ENCODE measurements at regions of chr5 and their contacts with region 1.

Region 1: GRCh38 chr5:88660947-88661805 is 221.8 kb downstream of the MEF2C start:
- DNase-seq: peak; percentile 96
- ATAC-seq: peak; percentile 94
- H3K4me3 ChIP-seq: peak overlapping the region; percentile 73
- H3K27ac ChIP-seq: peak overlapping the region; percentile 71
- H3K4me1 ChIP-seq: peaks cover 8% of the 10 kb centered on the region; the same call in 1 of the 2 replicates
- H3K27me3 ChIP-seq: no peaks in the 10 kb centered on the region
- CTCF ChIP-seq: no peak

Region 2: DNA sequence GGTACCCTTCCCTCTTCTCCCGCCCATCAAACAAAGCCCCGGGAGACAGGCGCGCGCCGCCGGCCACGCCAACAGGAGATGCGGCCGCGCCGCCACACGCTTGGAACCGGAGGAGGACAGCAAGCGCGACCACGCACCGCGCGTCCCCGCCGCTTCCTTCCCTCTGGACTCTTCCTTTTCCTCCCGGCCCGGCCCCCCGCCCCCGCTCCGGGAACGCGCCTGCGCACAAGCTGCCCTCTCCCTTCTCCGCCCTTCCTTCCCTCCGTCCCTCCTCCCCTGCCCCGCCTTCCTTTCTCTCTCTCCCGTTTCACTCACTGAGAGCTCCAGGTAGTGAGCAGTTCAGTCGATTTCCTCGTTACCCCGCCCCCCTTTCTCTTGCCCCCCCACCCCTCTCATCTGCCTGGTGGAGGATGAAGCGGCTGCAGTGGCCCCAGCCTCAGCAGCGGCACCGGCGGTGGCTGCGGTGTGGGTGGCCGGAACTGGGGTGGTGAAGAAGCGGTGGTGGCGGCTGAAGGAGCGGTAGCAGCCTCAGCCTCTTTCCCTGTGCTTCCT is 1393.5 kb before region 1 on chr5 and contains the start of gene RASA1:
- CTCF ChIA-PET with region 1: no interaction called
- POLR2A ChIA-PET with region 1: interaction called, 10 read pairs
- intact Hi-C with region 1: no loop called
- DNase-seq: peak; percentile 98
- ATAC-seq: peak; percentile 71
- H3K4me3 ChIP-seq: peak within 1 kb of the TSS; percentile 95
- H3K27ac ChIP-seq: peak within 1 kb of the TSS; percentile 79
- H3K4me1 ChIP-seq: peaks cover 14% of the 10 kb centered on the region; the same call in 1 of the 2 replicates
- H3K27me3 ChIP-seq: no peaks in the 10 kb centered on the region
- CTCF ChIP-seq: no peak
- total RNA-seq, gene RASA1: 37.3 and 40.1 TPM in 2 replicates

Region 3: GRCh38 chr5:87754009-87754757 is 907.0 kb before region 1 on chr5:
- CTCF ChIA-PET with region 1: no interaction called
- POLR2A ChIA-PET with region 1: interaction called, 10 read pairs
- intact Hi-C with region 1: no loop called
- DNase-seq: no peak
- ATAC-seq: no peak
- H3K4me3 ChIP-seq: no peak overlapping the region
- H3K27ac ChIP-seq: no peak overlapping the region
- H3K4me1 ChIP-seq: peaks cover 30% of the 10 kb centered on the region
- H3K27me3 ChIP-seq: no peaks in the 10 kb centered on the region
- CTCF ChIP-seq: no peak

Region 4: GRCh38 chr5:88268385-88269184 is 392.6 kb before region 1 on chr5 and contains the start of gene TMEM161B:
- CTCF ChIA-PET with region 1: no interaction called
- POLR2A ChIA-PET with region 1: interaction called, 18 read pairs
- intact Hi-C with region 1: loop called (anchors 2 kb)
- DNase-seq: peak; percentile 93
- ATAC-seq: peak; percentile 98
- H3K4me3 ChIP-seq: peak within 1 kb of the TSS; percentile 96
- H3K27ac ChIP-seq: peak within 1 kb of the TSS; percentile 28; the same call in 1 of the 2 replicates
- H3K4me1 ChIP-seq: peaks cover 33% of the 10 kb centered on the region
- H3K27me3 ChIP-seq: no peaks in the 10 kb centered on the region
- CTCF ChIP-seq: no peak
- total RNA-seq, gene TMEM161B: 11.5 and 12.2 TPM in 2 replicates

Region 5: GRCh38 chr5:88405783-88406182 is 255.4 kb before region 1 on chr5:
- CTCF ChIA-PET with region 1: no interaction called
- POLR2A ChIA-PET with region 1: no interaction called
- intact Hi-C with region 1: loop called (anchors 5 kb)
- DNase-seq: peak; percentile 63
- ATAC-seq: peak; percentile 94
- H3K4me3 ChIP-seq: peak overlapping the region; percentile 36
- H3K27ac ChIP-seq: peak overlapping the region; percentile 71
- H3K4me1 ChIP-seq: peaks cover 15% of the 10 kb centered on the region
- H3K27me3 ChIP-seq: no peaks in the 10 kb centered on the region
- CTCF ChIP-seq: no peak

Region 6: DNA sequence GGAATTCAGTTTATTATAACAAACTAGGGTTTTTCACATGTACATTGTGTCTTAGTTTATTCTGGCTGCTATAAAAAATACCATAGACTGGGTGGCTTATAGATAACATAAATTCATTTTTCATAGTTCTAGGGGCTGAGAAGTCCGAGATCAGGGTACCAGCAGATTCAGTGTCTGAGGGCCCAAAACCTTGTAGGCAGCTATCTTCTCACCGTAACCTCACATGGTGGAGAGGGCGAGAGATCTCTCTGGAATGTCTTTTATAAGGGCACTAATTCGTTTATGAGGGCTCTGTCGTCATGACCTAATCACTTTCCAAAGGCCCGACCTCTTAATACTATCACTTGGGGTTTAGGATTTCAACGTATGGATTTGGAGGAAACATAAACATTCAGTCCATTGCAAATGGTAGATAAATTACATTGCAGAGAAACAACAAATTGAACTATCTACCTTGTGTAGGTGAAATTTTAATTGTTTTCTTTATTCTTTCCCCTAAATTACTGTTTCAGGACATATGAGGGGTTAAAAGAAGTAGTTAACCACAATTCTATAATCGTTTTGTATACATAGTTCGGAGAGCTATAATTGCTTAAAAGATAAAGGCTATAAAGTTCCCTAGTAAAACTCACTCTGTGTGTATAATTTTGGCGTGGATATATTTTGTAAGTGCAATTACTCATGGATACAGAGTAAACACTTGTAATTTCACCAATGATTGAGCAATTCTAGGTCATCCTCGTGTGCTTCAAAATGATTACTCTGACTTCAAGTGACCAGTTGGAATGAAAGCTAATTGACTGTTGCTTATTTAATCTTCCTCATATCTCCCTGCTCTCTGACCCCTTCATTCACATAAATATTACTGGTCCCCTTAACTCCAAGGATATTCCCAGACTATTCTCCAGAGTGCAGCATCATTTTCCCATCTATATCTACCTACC is 145.0 kb before region 1 on chr5:
- CTCF ChIA-PET with region 1: interaction called, 4 read pairs
- POLR2A ChIA-PET with region 1: interaction called, 4 read pairs
- intact Hi-C with region 1: loop called (anchors 1 kb)
- DNase-seq: peak; percentile 86
- ATAC-seq: peak; percentile 96
- H3K4me3 ChIP-seq: no peak overlapping the region
- H3K27ac ChIP-seq: peak overlapping the region; percentile 47
- H3K4me1 ChIP-seq: peaks cover 18% of the 10 kb centered on the region
- H3K27me3 ChIP-seq: no peaks in the 10 kb centered on the region
- CTCF ChIP-seq: no peak

Region 7: DNA sequence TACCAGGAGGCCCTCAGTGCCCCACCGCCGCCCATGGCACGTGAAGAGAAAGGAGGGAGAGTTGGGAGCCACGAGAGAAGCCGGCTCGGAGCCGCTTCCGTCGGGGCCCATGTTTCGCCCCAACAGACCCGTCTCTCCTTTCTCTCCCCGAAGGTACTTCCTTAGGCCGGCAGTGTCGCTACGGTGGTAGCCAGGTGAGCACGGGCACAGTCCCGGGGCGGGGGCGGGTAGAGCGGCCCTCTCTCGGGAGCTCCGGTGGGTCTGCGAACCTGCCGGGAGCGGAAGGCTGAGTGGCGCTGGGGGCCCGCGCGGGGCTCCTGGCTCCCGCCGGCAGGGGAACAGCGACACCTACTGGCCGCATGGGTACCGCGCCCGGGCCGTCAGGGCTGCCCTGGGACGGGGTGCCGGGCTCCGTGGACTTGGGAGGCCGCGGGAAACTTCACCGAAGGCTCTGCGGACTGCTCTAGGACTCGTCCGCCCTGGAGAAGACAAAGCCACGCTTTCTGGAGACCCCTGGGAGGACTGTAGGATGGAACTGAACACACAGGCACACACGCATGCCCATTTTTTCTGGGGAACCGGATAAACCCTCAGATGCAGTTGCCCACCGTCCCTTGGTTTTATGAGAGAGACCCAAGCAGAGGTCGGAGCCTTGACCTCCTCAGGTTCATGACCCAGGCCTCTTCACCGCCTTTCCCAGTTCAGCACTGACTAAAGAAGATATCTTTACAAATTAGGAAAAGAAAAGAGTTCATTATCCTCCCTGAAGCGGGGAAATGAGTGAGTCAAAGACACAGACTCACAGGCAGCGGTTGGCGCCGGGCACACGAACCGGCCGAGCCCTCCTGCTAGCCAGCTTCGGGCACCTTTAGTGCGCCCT is 19.3 kb after region 1 on chr5:
- CTCF ChIA-PET with region 1: interaction called, 3 read pairs
- POLR2A ChIA-PET with region 1: interaction called, 12 read pairs
- intact Hi-C with region 1: no loop called
- DNase-seq: peak; percentile 80
- ATAC-seq: peak; percentile 96
- H3K4me3 ChIP-seq: peak overlapping the region; percentile 85
- H3K27ac ChIP-seq: no peak overlapping the region
- H3K4me1 ChIP-seq: peaks cover 6% of the 10 kb centered on the region; the same call in 1 of the 2 replicates
- H3K27me3 ChIP-seq: no peaks in the 10 kb centered on the region
- CTCF ChIP-seq: peak; percentile 89

Measured in PC-3 (cell line).